A549 (cell line): ENCODE measurements at regions of chr1 and their contacts with region 1.

Region 1: DNA sequence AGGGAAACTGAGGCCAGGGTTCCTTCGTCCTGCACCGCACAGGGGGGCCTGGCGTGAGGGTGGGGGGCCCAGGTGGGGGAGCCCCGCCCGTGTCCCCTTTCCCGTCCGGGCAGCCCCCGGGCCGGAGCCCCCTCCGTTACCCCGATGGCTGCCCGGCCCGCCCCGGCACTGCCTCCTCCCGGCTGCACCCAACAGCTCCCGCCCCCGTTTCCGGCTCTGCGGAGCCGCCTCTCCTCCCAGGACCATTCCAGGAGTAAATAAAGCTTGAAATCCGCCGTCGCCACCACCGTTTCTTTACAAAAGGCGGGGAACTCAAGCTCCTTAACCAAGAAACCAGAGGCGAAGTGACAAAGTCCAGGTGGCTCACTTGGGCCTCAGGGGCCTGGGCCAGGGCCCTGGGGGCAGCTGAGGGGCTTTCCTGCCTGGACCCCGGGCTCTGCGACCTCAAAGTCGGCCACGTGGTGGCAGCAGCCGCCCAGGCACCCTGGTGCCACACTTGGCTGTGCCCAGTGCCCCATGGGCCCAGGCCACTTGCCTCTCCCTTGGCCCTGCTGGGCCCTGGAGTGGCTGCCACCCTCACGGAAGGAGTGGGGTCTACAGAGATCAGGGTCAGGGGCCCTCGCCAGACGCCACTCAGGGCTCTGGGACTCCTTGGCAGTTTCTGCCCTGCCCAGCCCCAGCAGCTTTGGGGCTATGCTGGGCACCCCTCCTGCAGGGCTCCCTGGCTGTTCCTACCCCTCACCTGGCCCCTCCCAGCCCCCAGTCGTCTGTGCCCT is 514 bp upstream of the FAAP20 start:
- DNase-seq: peak; percentile 83 to 85
- ATAC-seq: peak; percentile 85 to 87
- H3K4me3 ChIP-seq: peak overlapping the region; percentile 77
- H3K27ac ChIP-seq: peak overlapping the region; percentile 99 to 100
- H3K4me1 ChIP-seq: peaks cover 21% of the 10 kb centered on the region
- CTCF ChIP-seq: peak; percentile 94
- EP300 ChIP-seq: no peak
- POLR2A ChIP-seq: 0 out of 2 replicates have a peak, but pooled peaks have one; percentile 3
- RAD21 ChIP-seq: peak; percentile 87 to 97

Region 2: GRCh38 chr1:2074944-2075740 is 119.9 kb before region 1 on chr1:
- CTCF ChIA-PET with region 1: no interaction called
- POLR2A ChIA-PET with region 1: no interaction called
- DNase-seq: no peak
- ATAC-seq: no peak
- H3K4me3 ChIP-seq: no peak overlapping the region
- H3K27ac ChIP-seq: no peak overlapping the region
- H3K4me1 ChIP-seq: no peaks in the 10 kb centered on the region
- CTCF ChIP-seq: no peak
- EP300 ChIP-seq: no peak
- POLR2A ChIP-seq: no peak
- RAD21 ChIP-seq: no peak

Region 3: GRCh38 chr1:2174348-2175054 is 20.6 kb before region 1 on chr1:
- CTCF ChIA-PET with region 1: interaction called, 18 read pairs
- POLR2A ChIA-PET with region 1: no interaction called
- DNase-seq: peak; percentile 54 to 86
- ATAC-seq: peak; percentile 83 to 93
- H3K4me3 ChIP-seq: no peak overlapping the region
- H3K27ac ChIP-seq: no peak overlapping the region
- H3K4me1 ChIP-seq: no peaks in the 10 kb centered on the region
- CTCF ChIP-seq: peak; percentile 60
- EP300 ChIP-seq: no peak
- POLR2A ChIP-seq: no peak
- RAD21 ChIP-seq: peak; percentile 42 to 57

Region 4: DNA sequence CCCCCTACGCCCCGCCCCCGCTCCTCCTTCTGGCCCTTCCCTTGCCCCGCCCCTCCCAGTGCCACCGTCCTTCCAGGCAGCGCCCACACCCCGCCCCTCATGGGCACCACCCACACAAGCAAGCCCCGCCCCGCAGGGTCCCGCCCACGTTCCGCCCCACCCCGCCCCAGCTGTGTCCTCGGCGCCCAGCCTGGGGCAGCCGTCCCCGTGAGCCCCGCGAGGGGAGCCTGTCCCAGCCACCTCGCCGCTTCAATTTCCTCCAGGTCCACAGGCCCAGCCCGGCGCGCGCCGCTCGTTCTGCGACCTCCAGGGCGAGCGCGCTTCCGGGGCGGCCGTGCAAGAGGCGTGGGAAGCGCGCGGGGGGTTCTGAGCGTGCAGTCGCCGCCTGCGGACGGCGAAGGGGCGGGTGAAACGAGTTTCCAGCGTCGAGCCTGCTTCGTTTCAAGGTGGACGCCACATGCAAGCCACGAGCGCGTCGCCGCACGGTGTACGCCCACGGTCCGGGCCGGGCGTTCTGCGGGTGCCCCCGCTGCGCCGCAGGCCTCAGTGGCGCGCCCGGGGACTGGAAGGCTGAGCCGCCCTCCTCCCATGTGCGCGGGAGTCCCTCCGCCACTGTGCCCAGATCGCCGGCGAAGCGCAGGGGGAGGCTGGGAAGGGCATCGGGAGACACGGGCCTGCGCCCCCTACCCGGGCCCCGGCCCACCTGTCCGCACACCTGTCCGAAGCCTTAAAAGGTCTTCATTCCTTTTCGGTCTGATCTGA is 10.3 kb after region 1 on chr1:
- CTCF ChIA-PET with region 1: interaction called, 30 read pairs
- POLR2A ChIA-PET with region 1: interaction called, 6 read pairs
- DNase-seq: peak in 1 of 2 experiments; percentile 92
- ATAC-seq: peak; percentile 36 to 51; a peak in 5 of 6 replicates
- H3K4me3 ChIP-seq: peak overlapping the region; percentile 53
- H3K27ac ChIP-seq: peak overlapping the region; percentile 85 to 86
- H3K4me1 ChIP-seq: peaks cover 52% of the 10 kb centered on the region
- CTCF ChIP-seq: no peak
- EP300 ChIP-seq: no peak
- POLR2A ChIP-seq: 0 out of 2 replicates have a peak, but pooled peaks have one; percentile 13
- RAD21 ChIP-seq: no peak

Region 5: GRCh38 chr1:2229037-2229864 is 34.2 kb after region 1 on chr1:
- CTCF ChIA-PET with region 1: interaction called, 49 read pairs
- POLR2A ChIA-PET with region 1: interaction called, 8 read pairs
- DNase-seq: peak in 1 of 2 experiments; percentile 68
- ATAC-seq: peak; percentile 11 to 26; a peak in 3 of 6 replicates
- H3K4me3 ChIP-seq: peak overlapping the region; percentile 67
- H3K27ac ChIP-seq: peak overlapping the region; percentile 76 to 83
- H3K4me1 ChIP-seq: peaks cover 46% of the 10 kb centered on the region
- CTCF ChIP-seq: no peak
- EP300 ChIP-seq: no peak
- POLR2A ChIP-seq: no peak
- RAD21 ChIP-seq: peak in 1 of 2 experiments; percentile 13; a peak in 1 of 5 replicates

Region 6: GRCh38 chr1:2314803-2315673 is 120.0 kb after region 1 on chr1:
- CTCF ChIA-PET with region 1: interaction called, 15 read pairs
- POLR2A ChIA-PET with region 1: interaction called, 6 read pairs
- DNase-seq: peak; percentile 35 to 67
- ATAC-seq: peak in 1 of 2 experiments; percentile 15; a peak in 3 of 6 replicates
- H3K4me3 ChIP-seq: peak overlapping the region; percentile 85
- H3K27ac ChIP-seq: peak overlapping the region; percentile 88 to 100
- H3K4me1 ChIP-seq: peaks cover 34% of the 10 kb centered on the region
- CTCF ChIP-seq: peak; percentile 69
- EP300 ChIP-seq: no peak
- POLR2A ChIP-seq: no peak
- RAD21 ChIP-seq: peak in 1 of 2 experiments; percentile 35; a peak in 2 of 5 replicates

Region 7: DNA sequence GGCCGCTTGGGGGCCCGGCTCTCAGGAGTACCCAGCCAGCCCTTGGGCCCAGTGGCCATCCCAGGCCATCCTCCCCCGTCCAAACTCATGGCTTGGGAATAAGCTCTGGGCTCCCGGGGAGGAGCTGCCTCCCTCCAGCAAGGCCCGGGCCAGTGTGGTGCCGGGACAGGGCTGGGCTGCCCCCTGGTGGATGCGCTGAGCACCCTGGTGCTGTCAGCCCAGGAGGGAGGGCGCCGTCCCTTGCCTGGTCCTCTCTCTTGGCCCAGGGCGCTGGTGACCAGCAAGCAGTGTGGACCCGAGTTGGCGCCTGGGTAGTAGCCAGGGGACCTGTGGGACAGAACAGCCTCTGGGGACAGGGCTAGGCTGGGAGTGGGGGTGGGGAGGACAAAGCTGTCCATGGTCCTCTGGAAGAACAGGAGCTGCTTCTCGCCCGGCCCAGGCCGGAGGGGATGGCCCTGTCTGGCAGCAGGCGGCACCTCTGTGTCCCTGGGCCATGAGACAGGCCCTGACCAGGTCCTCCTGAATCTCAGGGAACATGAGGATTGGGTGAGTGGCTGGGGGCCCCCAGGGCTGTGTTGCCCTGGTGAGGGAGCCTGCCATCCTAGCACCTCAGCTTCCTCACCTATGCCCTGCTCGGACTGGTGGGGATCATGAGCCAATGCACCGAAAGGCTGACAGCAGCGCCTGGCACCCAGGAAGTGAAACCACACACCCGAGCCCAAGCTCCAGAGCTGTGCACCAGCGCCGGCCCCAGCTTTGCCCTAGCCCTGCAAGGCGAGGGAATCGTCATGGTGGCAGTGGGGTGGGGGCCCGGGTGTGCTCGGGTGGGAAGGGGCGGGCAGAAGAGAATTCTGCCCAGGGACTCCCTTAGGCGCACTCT is 186.9 kb after region 1 on chr1:
- CTCF ChIA-PET with region 1: interaction called, 267 read pairs
- POLR2A ChIA-PET with region 1: interaction called, 25 read pairs
- DNase-seq: peak; percentile 67 to 89
- ATAC-seq: peak; percentile 90 to 98
- H3K4me3 ChIP-seq: no peak overlapping the region
- H3K27ac ChIP-seq: no peak overlapping the region
- H3K4me1 ChIP-seq: no peaks in the 10 kb centered on the region
- CTCF ChIP-seq: peak; percentile 68
- EP300 ChIP-seq: no peak
- POLR2A ChIP-seq: no peak
- RAD21 ChIP-seq: peak; percentile 76 to 82

Region 8: GRCh38 chr1:2391041-2391930 is 196.2 kb after region 1 on chr1 and contains the starts of genes MORN1 and RER1:
- CTCF ChIA-PET with region 1: interaction called, 267 read pairs
- POLR2A ChIA-PET with region 1: interaction called, 10 read pairs
- DNase-seq: peak; percentile 84 to 97
- ATAC-seq: peak; percentile 97
- H3K4me3 ChIP-seq: peak within 1 kb of the TSS; percentile 100
- H3K27ac ChIP-seq: peak within 1 kb of the TSS; percentile 98
- H3K4me1 ChIP-seq: peaks cover 25% of the 10 kb centered on the region
- CTCF ChIP-seq: no peak
- EP300 ChIP-seq: no peak
- POLR2A ChIP-seq: peak; percentile 65
- RAD21 ChIP-seq: no peak
- polyA plus RNA-seq, gene MORN1: 6.9 and 7.2 TPM in 2 replicates
- polyA plus RNA-seq, gene RER1: 213 and 227 TPM in 2 replicates

Region 9: GRCh38 chr1:2429780-2430591 is 234.9 kb after region 1 on chr1:
- CTCF ChIA-PET with region 1: no interaction called
- POLR2A ChIA-PET with region 1: no interaction called
- DNase-seq: no peak
- ATAC-seq: peak in 1 of 2 experiments; percentile 32; a peak in 2 of 6 replicates
- H3K4me3 ChIP-seq: no peak overlapping the region
- H3K27ac ChIP-seq: no peak overlapping the region
- H3K4me1 ChIP-seq: no peaks in the 10 kb centered on the region
- CTCF ChIP-seq: peak; percentile 14; the same call in 1 of the 3 replicates
- EP300 ChIP-seq: no peak
- POLR2A ChIP-seq: no peak
- RAD21 ChIP-seq: peak in 1 of 2 experiments; percentile 52; a peak in 2 of 5 replicates